ENCODE measurements at regions of chr20 and their contacts with region 1.

Region 1: DNA sequence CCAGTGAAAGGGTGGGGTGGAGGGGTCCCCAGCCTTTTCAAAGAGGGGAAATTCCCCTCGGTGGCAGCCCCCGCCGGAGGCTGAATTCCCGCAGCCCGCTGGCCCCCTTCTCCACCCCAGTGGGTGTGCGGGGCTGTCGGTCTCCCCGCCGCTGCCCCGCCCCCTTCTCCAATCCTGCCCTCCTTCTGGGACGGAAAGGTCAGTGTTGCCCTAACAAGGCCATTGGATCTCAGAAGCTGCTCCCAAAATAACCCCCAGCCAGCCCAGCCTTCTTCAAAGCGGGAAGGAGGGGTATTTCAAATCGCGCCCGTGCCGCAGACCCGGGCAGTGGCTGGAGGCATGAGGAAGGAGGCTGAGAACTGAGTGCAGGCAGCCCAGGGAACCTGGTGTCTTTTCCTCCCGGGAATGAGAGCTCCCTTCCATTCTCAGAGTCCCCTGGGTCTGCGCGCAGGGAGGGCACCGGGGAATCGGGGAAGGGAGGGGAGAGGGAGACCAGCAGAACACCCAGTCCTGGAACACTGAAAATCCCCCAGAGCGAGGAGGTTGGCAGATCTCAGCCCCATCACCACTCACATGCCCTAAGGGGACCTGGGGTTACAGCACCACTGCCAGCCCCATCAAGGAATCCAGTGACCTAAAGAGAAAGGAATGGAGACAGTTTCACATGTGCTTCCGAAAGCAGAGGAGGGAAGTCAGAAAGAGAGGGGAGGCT is at the start of gene JPH2:
- DNase-seq: no peak
- H3K4me3 ChIP-seq: peak within 1 kb of the TSS; percentile 47
- H3K27ac ChIP-seq: no peak within 1 kb of the TSS
- H3K4me1 ChIP-seq: peaks cover 2% of the 10 kb centered on the region
- H3K27me3 ChIP-seq: no peaks in the 10 kb centered on the region
- CTCF ChIP-seq: no peak
- total RNA-seq, gene JPH2: 1.0 and 1.1 TPM in 2 replicates

Region 2: GRCh38 chr20:44115762-44116644 is 71.2 kb before region 1 on chr20:
- CTCF ChIA-PET with region 1: interaction called, 86 read pairs
- POLR2A ChIA-PET with region 1: no interaction called
- intact Hi-C with region 1: loop called (anchors 1 kb)
- DNase-seq: no peak
- H3K4me3 ChIP-seq: no peak overlapping the region
- H3K27ac ChIP-seq: no peak overlapping the region
- H3K4me1 ChIP-seq: no peaks in the 10 kb centered on the region
- H3K27me3 ChIP-seq: no peaks in the 10 kb centered on the region
- CTCF ChIP-seq: no peak

Measured in A673 (cell line).